ENCODE measurements at regions of chr6 and their contacts with region 1.

Region 1: DNA sequence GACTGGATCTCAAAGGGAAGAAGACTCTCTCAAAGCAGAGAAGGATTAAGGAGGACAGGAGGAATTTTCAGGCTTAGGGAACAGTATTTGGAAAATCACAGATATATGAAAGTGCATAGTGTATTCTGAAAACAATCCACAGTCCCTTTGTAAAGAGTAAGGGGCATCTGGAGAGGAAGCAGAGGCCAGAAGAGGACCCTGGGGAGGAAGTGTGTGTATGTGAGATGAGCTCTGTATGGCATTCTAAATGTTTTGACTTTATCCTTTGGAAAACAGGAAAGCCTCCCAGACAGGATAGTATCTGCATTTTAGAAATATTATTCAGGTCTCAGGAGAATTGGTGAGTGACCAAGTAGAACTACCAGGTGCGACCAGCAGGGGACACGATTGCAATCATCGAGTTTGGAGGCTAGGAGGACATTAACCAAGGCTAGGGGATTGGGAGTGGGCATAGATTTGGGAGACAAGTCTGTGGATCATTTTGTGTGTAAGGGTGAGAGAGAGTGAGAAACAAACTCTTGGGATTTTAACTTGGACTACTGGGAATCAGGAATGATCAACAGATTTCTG is 38.3 kb upstream of the FAM184A start:
- DNase-seq: no peak
- ATAC-seq: no peak
- H3K4me3 ChIP-seq: no peak overlapping the region
- H3K27ac ChIP-seq: no peak overlapping the region
- H3K4me1 ChIP-seq: no peaks in the 10 kb centered on the region
- H3K27me3 ChIP-seq: no peaks in the 10 kb centered on the region; the same call in 1 of the 2 replicates
- CTCF ChIP-seq: no peak
- POLR2A ChIP-seq: no peak
- RAD21 ChIP-seq: no peak

Region 2: GRCh38 chr6:118968416-118968815 is 148.4 kb before region 1 on chr6:
- CTCF ChIA-PET with region 1: interaction called, 3 read pairs
- POLR2A ChIA-PET with region 1: no interaction called
- dilution Hi-C with region 1: no loop called
- in situ Hi-C with region 1: loop called (anchors 5 kb)
- intact Hi-C with region 1: no loop called
- DNase-seq: peak; percentile 1
- ATAC-seq: no peak
- H3K4me3 ChIP-seq: no peak overlapping the region
- H3K27ac ChIP-seq: no peak overlapping the region
- H3K4me1 ChIP-seq: no peaks in the 10 kb centered on the region
- H3K27me3 ChIP-seq: no peaks in the 10 kb centered on the region
- CTCF ChIP-seq: peak; percentile 14; the same call in 1 of the 2 replicates
- POLR2A ChIP-seq: no peak
- RAD21 ChIP-seq: no peak

Region 3: GRCh38 chr6:119073307-119074051 is 43.3 kb before region 1 on chr6:
- CTCF ChIA-PET with region 1: no interaction called
- POLR2A ChIA-PET with region 1: no interaction called
- dilution Hi-C with region 1: no loop called
- in situ Hi-C with region 1: no loop called
- intact Hi-C with region 1: no loop called
- DNase-seq: no peak
- ATAC-seq: no peak
- H3K4me3 ChIP-seq: no peak overlapping the region
- H3K27ac ChIP-seq: no peak overlapping the region
- H3K4me1 ChIP-seq: no peaks in the 10 kb centered on the region; the same call in 1 of the 2 replicates
- H3K27me3 ChIP-seq: peaks cover 18% of the 10 kb centered on the region
- CTCF ChIP-seq: no peak
- POLR2A ChIP-seq: no peak
- RAD21 ChIP-seq: no peak

Region 4: DNA sequence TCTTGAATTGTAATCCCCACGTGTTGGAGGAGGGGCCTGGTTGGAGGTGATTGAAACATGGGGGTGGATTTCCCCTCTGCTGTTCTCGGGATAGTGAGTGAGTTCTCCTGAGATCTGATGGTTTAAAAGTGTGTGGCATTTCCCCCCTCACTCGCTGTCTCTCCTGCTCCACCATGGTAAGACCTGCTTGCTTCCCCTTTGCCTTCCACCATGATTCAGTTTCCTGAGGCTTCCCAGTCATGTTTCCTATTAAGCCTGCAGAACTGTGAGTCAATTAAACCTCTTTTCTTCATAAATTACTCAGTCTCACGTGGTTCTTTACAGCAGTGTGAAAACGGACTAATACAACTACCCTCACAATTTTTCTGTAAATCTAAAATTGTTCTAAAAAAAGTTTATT is 11.5 kb before region 1 on chr6:
- CTCF ChIA-PET with region 1: no interaction called
- POLR2A ChIA-PET with region 1: no interaction called
- dilution Hi-C with region 1: no loop called
- in situ Hi-C with region 1: no loop called
- intact Hi-C with region 1: no loop called
- DNase-seq: no peak
- ATAC-seq: no peak
- H3K4me3 ChIP-seq: no peak overlapping the region
- H3K27ac ChIP-seq: no peak overlapping the region
- H3K4me1 ChIP-seq: no peaks in the 10 kb centered on the region
- H3K27me3 ChIP-seq: peaks cover 5% of the 10 kb centered on the region; the same call in 1 of the 2 replicates
- CTCF ChIP-seq: no peak
- POLR2A ChIP-seq: no peak
- RAD21 ChIP-seq: no peak

Measured in IMR-90 (cell line).